Ovary (tissue), 10 donors: ENCODE measurements at regions of chr18 and their contacts with region 1.

Region 1: GRCh38 chr18:75757951-75758350 is 330.4 kb upstream of the SMIM21 start:
- DNase-seq: no peak
- H3K4me3 ChIP-seq: no peak overlapping the region
- H3K27ac ChIP-seq: no peak overlapping the region
- H3K4me1 ChIP-seq: no peaks in the 10 kb centered on the region
- H3K27me3 ChIP-seq: no peaks in the 10 kb centered on the region
- CTCF ChIP-seq: no peak
- EP300 ChIP-seq: no peak
- POLR2A ChIP-seq: no peak

Region 2: DNA sequence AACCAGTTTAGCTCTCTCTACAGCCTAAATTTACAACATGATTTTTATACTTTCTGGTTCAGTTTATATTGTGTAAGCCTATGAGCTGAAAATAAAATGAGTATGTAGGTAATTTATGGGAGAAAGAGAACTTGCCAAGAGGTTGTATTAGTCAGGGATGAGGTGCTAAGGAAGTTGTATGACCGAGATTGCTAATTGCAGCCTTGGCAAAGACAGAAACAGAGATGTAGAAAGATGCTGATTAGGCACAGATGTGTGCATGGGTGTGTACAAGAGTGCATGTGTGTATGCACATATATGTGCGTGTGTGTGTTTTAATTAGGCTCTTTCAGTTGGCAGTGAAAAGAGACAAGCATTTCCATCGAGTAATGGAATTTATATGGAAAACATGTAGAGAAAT is 1824.3 kb before region 1 on chr18:
- intact Hi-C with region 1: loop called in 1 of 4 experiments (anchors 5 kb)
- DNase-seq: no peak
- H3K4me3 ChIP-seq: no peak overlapping the region
- H3K27ac ChIP-seq: no peak overlapping the region
- H3K4me1 ChIP-seq: no peaks in the 10 kb centered on the region
- H3K27me3 ChIP-seq: no peaks in the 10 kb centered on the region
- CTCF ChIP-seq: no peak
- EP300 ChIP-seq: no peak
- POLR2A ChIP-seq: no peak

Region 3: DNA sequence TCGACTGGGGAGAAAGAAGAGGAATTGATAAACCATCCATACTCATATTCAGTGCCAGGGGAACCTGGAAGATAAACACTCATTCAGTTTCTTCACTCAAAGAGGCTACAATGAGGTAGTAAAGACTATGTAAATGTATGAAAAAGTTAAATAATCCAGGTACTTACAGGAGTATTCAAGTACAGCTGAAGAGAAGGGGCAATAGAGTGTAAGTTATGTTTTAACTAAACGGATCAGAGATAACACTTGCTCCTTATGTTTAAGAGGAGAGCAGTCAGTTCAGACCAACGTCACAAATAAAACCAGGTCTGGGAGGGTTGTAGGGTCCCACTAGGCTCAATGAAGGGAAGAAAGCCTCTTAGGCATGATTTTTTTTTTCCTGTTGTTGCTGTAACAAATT is 27.9 kb after region 1 on chr18:
- intact Hi-C with region 1: loop called in 1 of 4 experiments (anchors 2 kb)
- DNase-seq: no peak
- H3K4me3 ChIP-seq: no peak overlapping the region
- H3K27ac ChIP-seq: no peak overlapping the region
- H3K4me1 ChIP-seq: no peaks in the 10 kb centered on the region
- H3K27me3 ChIP-seq: no peaks in the 10 kb centered on the region
- CTCF ChIP-seq: no peak
- EP300 ChIP-seq: no peak
- POLR2A ChIP-seq: no peak

Region 4: GRCh38 chr18:76153691-76154090 is 395.7 kb after region 1 on chr18:
- intact Hi-C with region 1: no loop called
- DNase-seq: no peak
- H3K4me3 ChIP-seq: no peak overlapping the region
- H3K27ac ChIP-seq: no peak overlapping the region
- H3K4me1 ChIP-seq: no peaks in the 10 kb centered on the region
- H3K27me3 ChIP-seq: no peaks in the 10 kb centered on the region
- CTCF ChIP-seq: no peak
- EP300 ChIP-seq: no peak
- POLR2A ChIP-seq: no peak